ENCODE measurements at regions of chr20 and their contacts with region 1.

Region 1: GRCh38 chr20:8019246-8019997 is at the start of gene TMX4:
- DNase-seq: peak; percentile 90
- H3K4me3 Mint-ChIP-seq: peak within 1 kb of the TSS; percentile 85
- H3K27ac Mint-ChIP-seq: peak within 1 kb of the TSS; percentile 73
- H3K4me1 Mint-ChIP-seq: peaks cover 21% of the 10 kb centered on the region
- H3K27me3 Mint-ChIP-seq: peaks cover 5% of the 10 kb centered on the region
- total RNA-seq, gene TMX4: 30.0 and 31.1 TPM in 2 replicates

Region 2: GRCh38 chr20:7790189-7790588 is 229.2 kb before region 1 on chr20:
- intact Hi-C with region 1: no loop called
- DNase-seq: no peak
- H3K4me3 Mint-ChIP-seq: no peak overlapping the region
- H3K27ac Mint-ChIP-seq: no peak overlapping the region
- H3K4me1 Mint-ChIP-seq: no peaks in the 10 kb centered on the region
- H3K27me3 Mint-ChIP-seq: no peaks in the 10 kb centered on the region

Region 3: GRCh38 chr20:8454137-8454712 is 434.8 kb after region 1 on chr20:
- intact Hi-C with region 1: loop called (anchors 10 kb)
- DNase-seq: no peak
- H3K4me3 Mint-ChIP-seq: no peak overlapping the region
- H3K27ac Mint-ChIP-seq: peak overlapping the region; percentile 6
- H3K4me1 Mint-ChIP-seq: peaks cover 8% of the 10 kb centered on the region
- H3K27me3 Mint-ChIP-seq: no peaks in the 10 kb centered on the region

Measured in activated T-helper 2 cell treated with anti-CD3 and anti-CD28 coated beads, Interferon-gamma antibody, Interleukin-2, Interleukin-4, amounts not matched to agents 10 μg/mL and 5 μg/mL and 100 μg/mL, durations not matched to agents 14 hours and 24 hours and 36 hours (primary cell).